Activated CD4-positive, alpha-beta T cell treated with anti-CD3 and anti-CD28 coated beads, Interleukin-2, amount 10 ng/mL, durations not matched to agents 24 days and 14 days (primary cell): ENCODE measurements at regions of chr4 and their contacts with region 1.

Region 1: DNA sequence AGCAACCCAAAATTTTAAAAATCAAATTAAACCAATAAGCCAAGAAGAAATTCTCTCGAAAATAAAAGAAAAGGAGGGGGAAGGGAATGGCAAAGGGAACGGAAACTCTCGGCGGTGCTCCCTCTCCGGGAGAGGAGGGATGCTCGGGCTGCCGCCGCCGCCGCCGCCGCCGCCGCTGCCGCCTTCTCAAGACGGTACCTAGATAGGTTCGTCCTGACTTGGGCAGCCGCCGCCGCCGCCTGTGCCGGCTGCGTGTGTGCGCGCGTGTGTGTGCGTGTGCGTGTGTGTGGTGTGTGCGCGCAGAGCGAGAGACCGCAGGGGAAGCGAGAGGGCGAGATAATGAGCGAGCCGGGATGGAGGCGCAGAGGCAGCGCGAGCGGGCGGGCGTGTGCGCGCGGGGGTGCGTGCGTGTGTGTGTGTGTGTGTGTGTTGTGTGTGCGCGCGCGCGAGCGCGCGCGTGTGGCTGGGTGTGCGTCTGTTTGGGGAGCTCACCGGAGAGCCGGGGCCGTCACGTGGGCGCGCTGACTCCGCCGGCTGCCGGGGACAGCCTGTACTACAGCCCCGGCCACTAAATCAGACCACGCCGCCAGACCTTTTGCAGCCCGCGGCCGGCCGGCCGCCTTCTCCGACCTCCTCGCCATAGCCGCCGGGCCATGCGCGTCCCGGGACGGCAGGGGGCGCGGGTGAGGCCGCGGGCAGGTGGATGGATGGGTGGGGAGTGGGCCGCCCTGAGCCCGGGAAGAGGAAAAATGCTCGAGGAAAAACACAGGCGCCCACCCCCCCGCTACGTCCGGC is 111.6 kb downstream of the DHX15 start:
- DNase-seq: peak; percentile 86
- H3K4me3 Mint-ChIP-seq: peak overlapping the region; percentile 90
- H3K27ac Mint-ChIP-seq: peak overlapping the region; percentile 79
- H3K4me1 Mint-ChIP-seq: peaks cover 28% of the 10 kb centered on the region
- H3K27me3 Mint-ChIP-seq: peaks cover 71% of the 10 kb centered on the region

Region 2: GRCh38 chr4:24551492-24552289 is 79.0 kb after region 1 on chr4:
- intact Hi-C with region 1: loop called (anchors 10 kb)
- DNase-seq: no peak
- H3K4me3 Mint-ChIP-seq: no peak overlapping the region
- H3K27ac Mint-ChIP-seq: no peak overlapping the region
- H3K4me1 Mint-ChIP-seq: peaks cover 41% of the 10 kb centered on the region
- H3K27me3 Mint-ChIP-seq: no peaks in the 10 kb centered on the region

Region 3: GRCh38 chr4:24753500-24753899 is 280.8 kb after region 1 on chr4:
- intact Hi-C with region 1: no loop called
- DNase-seq: no peak
- H3K4me3 Mint-ChIP-seq: no peak overlapping the region
- H3K27ac Mint-ChIP-seq: no peak overlapping the region
- H3K4me1 Mint-ChIP-seq: no peaks in the 10 kb centered on the region
- H3K27me3 Mint-ChIP-seq: no peaks in the 10 kb centered on the region

Region 4: GRCh38 chr4:25246680-25247611 is 774.2 kb after region 1 on chr4:
- intact Hi-C with region 1: loop called (anchors 10 kb)
- DNase-seq: no peak
- H3K4me3 Mint-ChIP-seq: no peak overlapping the region
- H3K27ac Mint-ChIP-seq: no peak overlapping the region
- H3K4me1 Mint-ChIP-seq: peaks cover 21% of the 10 kb centered on the region
- H3K27me3 Mint-ChIP-seq: no peaks in the 10 kb centered on the region